PC-3 (cell line): ENCODE measurements at regions of chr20 and their contacts with region 1.

Region 1: DNA sequence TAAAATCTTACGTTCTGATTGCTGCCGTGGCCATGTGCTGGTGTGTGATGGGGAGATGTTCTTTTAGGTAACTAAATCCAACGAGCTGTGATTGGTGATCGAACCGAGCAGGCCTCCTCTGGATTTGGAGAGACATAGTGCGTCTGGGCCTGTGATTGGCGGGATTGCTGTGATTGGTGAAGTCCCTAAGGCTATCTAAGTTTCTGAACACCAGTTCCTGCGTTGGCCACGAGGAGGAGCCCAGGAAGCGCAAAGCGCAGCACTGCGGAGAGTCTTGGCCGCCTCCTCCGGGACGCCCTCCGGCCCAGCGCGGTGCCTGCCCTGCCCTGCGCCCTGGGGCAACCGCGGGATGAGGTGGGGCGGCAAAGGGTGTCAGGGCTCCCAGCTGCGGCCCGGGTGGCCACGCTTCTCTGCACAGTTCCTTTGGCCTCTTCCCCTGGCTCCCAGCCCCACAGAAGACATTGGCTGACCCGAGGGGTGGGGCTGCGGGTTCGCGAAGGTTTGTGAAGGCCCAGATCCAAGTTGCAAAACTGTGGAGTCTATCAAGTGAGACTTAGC is 33.0 kb downstream of the HNF4A start:
- DNase-seq: peak; percentile 91
- ATAC-seq: peak; percentile 78
- H3K4me3 ChIP-seq: peak overlapping the region; percentile 45
- H3K27ac ChIP-seq: no peak overlapping the region
- H3K4me1 ChIP-seq: peaks cover 12% of the 10 kb centered on the region
- H3K27me3 ChIP-seq: no peaks in the 10 kb centered on the region
- CTCF ChIP-seq: peak; percentile 97

Region 2: DNA sequence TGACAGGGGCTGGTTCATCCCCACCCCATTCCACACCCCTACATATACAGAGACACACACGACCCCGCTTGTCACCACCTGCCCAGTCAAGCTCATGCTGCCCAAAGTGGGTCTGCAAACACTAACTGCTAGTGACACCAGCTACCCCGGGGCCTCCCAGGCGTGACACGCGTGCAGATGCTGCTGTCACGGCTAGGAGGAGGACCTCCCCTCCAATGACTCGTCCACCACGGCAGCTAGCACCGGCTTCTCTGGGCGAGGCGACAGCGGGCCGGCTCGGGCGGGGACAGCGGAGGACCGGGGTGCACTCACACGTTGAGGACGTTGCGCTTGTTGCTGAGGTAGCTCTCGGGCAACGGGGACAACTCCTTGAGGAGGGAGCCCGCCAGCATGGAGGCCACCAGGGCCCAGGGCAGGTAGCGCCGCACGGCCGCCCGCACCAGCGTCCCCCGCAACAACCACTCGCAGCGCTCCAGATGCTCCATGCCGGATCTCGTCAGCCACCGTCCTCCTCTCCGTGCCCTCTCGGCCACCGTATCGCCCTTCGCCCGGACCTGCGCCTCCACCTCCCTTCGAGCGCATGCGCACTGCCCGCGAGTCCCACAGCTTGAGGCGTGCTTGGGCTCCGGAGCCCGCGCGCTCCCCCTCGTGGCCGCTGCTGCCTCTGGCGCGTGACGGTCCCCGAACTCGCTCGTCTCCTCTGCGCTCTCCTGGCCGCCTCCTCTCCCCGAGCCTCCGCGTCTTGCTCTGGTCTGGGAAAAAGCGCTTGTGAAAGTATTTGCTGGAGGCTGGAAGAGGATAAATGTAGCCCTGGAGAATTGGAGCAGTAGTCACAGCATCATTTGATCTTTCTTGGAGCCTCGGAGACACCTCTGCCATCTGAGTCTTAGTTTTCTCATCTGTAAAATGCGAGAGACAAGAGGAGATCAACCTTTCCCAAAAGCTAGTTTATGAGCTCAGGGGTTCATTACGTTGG is 77.6 kb before region 1 on chr20 and contains the start of gene FITM2:
- CTCF ChIA-PET with region 1: interaction called, 17 read pairs
- POLR2A ChIA-PET with region 1: no interaction called
- intact Hi-C with region 1: loop called (anchors 1 kb)
- DNase-seq: peak; percentile 98
- ATAC-seq: peak; percentile 89
- H3K4me3 ChIP-seq: peak within 1 kb of the TSS; percentile 92
- H3K27ac ChIP-seq: no peak within 1 kb of the TSS
- H3K4me1 ChIP-seq: peaks cover 11% of the 10 kb centered on the region
- H3K27me3 ChIP-seq: no peaks in the 10 kb centered on the region
- CTCF ChIP-seq: peak; percentile 96
- total RNA-seq, gene FITM2: 8.8 and 9.9 TPM in 2 replicates

Region 3: DNA sequence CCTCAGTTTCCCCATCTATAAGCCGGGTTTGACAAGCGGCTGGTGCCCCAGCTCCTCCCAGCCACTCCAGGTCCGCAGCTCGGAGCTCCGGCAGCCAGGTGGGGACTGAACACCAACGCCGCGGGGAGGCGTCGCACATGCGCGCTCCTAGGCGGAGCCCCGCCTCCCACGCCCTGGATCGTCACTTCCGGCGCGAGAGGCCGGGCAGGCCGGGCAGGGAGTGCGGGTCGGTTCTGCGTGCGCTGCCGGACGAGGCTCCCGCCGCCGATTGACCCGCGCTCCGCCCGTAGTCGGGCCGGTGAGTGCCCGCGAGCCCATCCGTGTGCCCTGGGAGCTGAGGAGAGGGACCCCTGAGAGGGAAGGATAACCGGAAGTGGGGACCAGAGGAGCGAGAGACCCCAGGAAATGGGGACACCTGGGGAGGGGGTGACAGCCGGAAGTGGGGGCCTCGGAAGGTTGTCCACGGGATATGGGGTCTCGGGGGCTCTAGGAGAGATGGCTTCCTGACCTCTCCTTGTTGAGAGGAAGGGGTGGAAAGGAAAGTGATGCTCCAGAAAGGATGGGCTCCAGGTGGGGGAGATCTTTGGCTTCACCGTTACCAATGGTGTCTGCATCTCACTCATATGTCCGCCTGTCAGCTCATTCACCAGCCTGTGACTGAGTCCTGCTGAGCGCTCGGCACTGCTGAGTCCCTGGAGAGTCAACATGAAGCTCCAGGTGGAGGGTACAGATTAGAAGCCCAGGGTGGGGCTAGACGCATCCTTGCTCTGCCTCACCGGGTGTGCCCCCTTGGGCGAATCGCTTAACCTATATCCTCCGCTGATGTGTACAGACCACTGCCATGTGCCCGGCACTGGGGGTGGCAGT is 87.4 kb after region 1 on chr20 and contains the start of gene TTPAL:
- CTCF ChIA-PET with region 1: interaction called, 3 read pairs
- POLR2A ChIA-PET with region 1: no interaction called
- intact Hi-C with region 1: loop called (anchors 1 kb)
- DNase-seq: peak; percentile 97
- ATAC-seq: peak; percentile 92
- H3K4me3 ChIP-seq: peak within 1 kb of the TSS; percentile 77
- H3K27ac ChIP-seq: peak within 1 kb of the TSS; percentile 48
- H3K4me1 ChIP-seq: peaks cover 20% of the 10 kb centered on the region
- H3K27me3 ChIP-seq: no peaks in the 10 kb centered on the region
- CTCF ChIP-seq: peak; percentile 41; the same call in 1 of the 2 replicates
- total RNA-seq, gene TTPAL: 14.0 and 17.9 TPM in 2 replicates

Region 4: GRCh38 chr20:44609511-44610312 is 221.2 kb after region 1 on chr20:
- CTCF ChIA-PET with region 1: interaction called, 5 read pairs
- POLR2A ChIA-PET with region 1: no interaction called
- intact Hi-C with region 1: loop called (anchors 1 kb)
- DNase-seq: peak; percentile 94
- ATAC-seq: peak; percentile 97
- H3K4me3 ChIP-seq: no peak overlapping the region
- H3K27ac ChIP-seq: peak overlapping the region; percentile 65
- H3K4me1 ChIP-seq: peaks cover 8% of the 10 kb centered on the region
- H3K27me3 ChIP-seq: no peaks in the 10 kb centered on the region
- CTCF ChIP-seq: peak; percentile 98